B cell (primary cell): ENCODE measurements at regions of chr4 and their contacts with region 1.

Region 1: GRCh38 chr4:122914292-122914904 is 8.0 kb downstream of the NUDT6 start:
- DNase-seq: no peak
- ATAC-seq: no peak
- H3K4me3 ChIP-seq: no peak overlapping the region
- H3K4me3 Mint-ChIP-seq: no peak overlapping the region
- H3K27ac ChIP-seq: no peak overlapping the region
- H3K27ac Mint-ChIP-seq: no peak overlapping the region
- H3K4me1 ChIP-seq: no peaks in the 10 kb centered on the region
- H3K4me1 Mint-ChIP-seq: no peaks in the 10 kb centered on the region
- H3K27me3 ChIP-seq: no peaks in the 10 kb centered on the region
- H3K27me3 Mint-ChIP-seq: no peaks in the 10 kb centered on the region
- CTCF ChIP-seq: peak; percentile 59

Region 2: GRCh38 chr4:122903766-122904288 is 10.6 kb before region 1 on chr4:
- CTCF ChIA-PET with region 1: interaction called, 15 read pairs
- POLR2A ChIA-PET with region 1: no interaction called
- intact Hi-C with region 1: no loop called
- DNase-seq: no peak
- ATAC-seq: no peak
- H3K4me3 ChIP-seq: no peak overlapping the region
- H3K4me3 Mint-ChIP-seq: no peak overlapping the region
- H3K27ac ChIP-seq: no peak overlapping the region
- H3K27ac Mint-ChIP-seq: no peak overlapping the region
- H3K4me1 ChIP-seq: no peaks in the 10 kb centered on the region
- H3K4me1 Mint-ChIP-seq: no peaks in the 10 kb centered on the region
- H3K27me3 ChIP-seq: no peaks in the 10 kb centered on the region
- H3K27me3 Mint-ChIP-seq: no peaks in the 10 kb centered on the region
- CTCF ChIP-seq: no peak

Region 3: GRCh38 chr4:122930862-122931261 is 16.5 kb after region 1 on chr4:
- CTCF ChIA-PET with region 1: interaction called, 28 read pairs
- POLR2A ChIA-PET with region 1: no interaction called
- intact Hi-C with region 1: no loop called
- DNase-seq: peak; percentile 27
- ATAC-seq: no peak
- H3K4me3 ChIP-seq: no peak overlapping the region
- H3K4me3 Mint-ChIP-seq: no peak overlapping the region
- H3K27ac ChIP-seq: no peak overlapping the region
- H3K27ac Mint-ChIP-seq: no peak overlapping the region
- H3K4me1 ChIP-seq: no peaks in the 10 kb centered on the region
- H3K4me1 Mint-ChIP-seq: no peaks in the 10 kb centered on the region
- H3K27me3 ChIP-seq: no peaks in the 10 kb centered on the region
- H3K27me3 Mint-ChIP-seq: no peaks in the 10 kb centered on the region
- CTCF ChIP-seq: peak; percentile 78

Region 4: GRCh38 chr4:122946142-122946541 is 31.7 kb after region 1 on chr4:
- CTCF ChIA-PET with region 1: no interaction called
- POLR2A ChIA-PET with region 1: no interaction called
- intact Hi-C with region 1: no loop called
- DNase-seq: no peak
- ATAC-seq: no peak
- H3K4me3 ChIP-seq: no peak overlapping the region
- H3K4me3 Mint-ChIP-seq: no peak overlapping the region
- H3K27ac ChIP-seq: no peak overlapping the region
- H3K27ac Mint-ChIP-seq: no peak overlapping the region
- H3K4me1 ChIP-seq: no peaks in the 10 kb centered on the region
- H3K4me1 Mint-ChIP-seq: no peaks in the 10 kb centered on the region
- H3K27me3 ChIP-seq: no peaks in the 10 kb centered on the region
- H3K27me3 Mint-ChIP-seq: no peaks in the 10 kb centered on the region
- CTCF ChIP-seq: no peak